Esophagus muscularis mucosa (tissue), 4 donors: ENCODE measurements at regions of chr17 and their contacts with region 1.

Region 1: DNA sequence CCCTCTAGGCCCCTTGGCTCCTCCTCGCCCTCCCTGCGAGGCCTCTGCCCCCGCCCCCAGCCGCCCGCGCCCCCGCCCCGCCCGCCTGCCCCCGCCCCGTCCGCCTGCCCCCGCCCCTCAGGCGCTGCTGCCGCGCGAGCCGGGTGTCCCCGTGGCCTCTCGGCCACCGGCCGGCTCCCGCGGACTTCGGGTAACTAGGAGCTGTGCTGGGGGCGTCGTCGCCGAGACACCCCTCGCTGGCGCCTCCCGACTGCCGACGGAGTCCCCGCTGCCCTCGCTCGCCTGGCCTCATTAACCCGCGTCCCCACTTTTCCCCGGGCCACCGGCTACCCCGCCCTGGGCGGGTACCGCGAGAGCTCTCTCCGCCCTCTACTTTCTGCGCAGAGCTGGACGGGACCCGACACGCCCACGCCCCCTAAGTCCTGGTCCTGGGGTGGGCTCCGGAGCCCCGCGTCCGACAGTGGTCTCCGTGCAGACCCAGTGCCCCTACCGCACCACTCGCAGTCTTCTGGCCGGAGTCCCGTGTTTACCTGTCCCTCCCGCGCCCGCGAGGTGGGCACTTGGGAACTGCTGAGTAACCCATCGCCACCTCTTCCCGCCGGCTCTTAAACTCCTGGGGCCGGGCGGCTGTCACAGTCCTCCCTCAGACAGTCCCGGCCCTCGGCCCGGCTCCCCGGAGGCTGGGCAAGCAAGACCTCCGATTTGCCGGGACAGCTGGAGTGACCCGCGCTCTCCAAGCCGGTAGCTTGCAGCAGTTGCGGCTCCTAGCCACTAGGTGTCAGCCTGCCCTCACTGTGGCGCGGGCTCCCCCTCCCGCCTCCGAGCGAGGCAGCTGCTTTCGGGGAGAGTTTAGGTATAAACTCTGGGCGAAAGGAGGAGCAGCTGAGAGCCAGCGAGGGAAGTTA is at the start of gene TLCD1:
- DNase-seq: peak; percentile 98
- H3K4me3 ChIP-seq: peak within 1 kb of the TSS; percentile 72 to 98 (median 76)
- H3K27ac ChIP-seq: peak within 1 kb of the TSS; percentile 95 to 98 (median 96)
- H3K4me1 ChIP-seq: peaks cover 35 to 61% (median 57%) of the 10 kb centered on the region in 4 donors
- H3K27me3 ChIP-seq: no peaks in the 10 kb centered on the region
- CTCF ChIP-seq: peak; percentile 98 to 100 (median 100)
- EP300 ChIP-seq: no peak
- POLR2A ChIP-seq: no peak
- total RNA-seq, gene TLCD1: 1.0 to 1.5 (median 1.3) TPM in 3 of 4 donors, not detected in the other

Region 2: DNA sequence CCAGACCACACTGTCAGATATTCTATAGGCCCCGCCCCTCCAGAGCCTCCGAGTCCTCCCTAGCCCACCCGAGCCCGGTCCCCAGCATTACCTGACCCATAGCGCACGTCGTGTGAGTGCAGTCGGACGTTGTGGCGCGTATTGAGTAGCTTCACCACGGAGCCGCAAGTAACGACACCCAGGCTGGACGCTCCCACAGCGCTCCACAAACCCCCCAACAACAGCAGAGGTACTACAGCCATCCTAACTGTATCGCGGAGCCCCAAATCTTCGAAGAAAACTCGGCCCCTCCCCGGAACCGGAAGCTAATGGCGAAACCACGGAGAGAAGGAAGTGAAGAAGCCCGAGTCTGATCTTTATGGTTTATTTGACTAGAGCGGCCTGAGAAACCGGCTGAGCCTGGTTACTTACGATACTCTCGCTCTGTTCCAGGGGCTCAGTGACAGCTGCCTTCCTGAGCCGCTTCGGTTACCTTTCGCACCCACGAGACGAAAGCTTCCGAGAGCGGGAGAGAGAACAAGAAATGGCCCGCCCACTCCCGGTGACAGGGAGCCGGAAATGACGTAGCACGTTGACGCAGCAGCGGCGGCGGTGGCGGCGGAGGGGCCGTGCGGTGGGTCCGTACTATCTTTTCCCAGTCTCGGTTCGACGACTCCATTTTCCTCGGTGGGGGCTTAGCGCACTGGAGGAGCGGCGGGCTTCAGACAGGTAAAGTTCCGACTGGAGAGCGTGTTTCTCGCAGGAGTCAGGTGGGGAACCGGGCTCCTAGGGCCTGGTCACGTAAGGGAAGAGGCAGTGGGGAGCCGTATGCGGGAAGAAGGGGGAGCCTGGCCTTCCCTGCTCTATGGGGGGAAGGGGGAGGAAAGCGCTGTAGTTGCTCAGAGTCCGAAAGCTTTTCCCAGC is 64.6 kb before region 1 on chr17 and contains the starts of genes SDF2 and SUPT6H:
- intact Hi-C with region 1: no loop called
- DNase-seq: peak; percentile 99
- H3K4me3 ChIP-seq: peak within 1 kb of the TSS; percentile 76 to 83 (median 80)
- H3K27ac ChIP-seq: peak within 1 kb of the TSS; percentile 95 to 99 (median 96)
- H3K4me1 ChIP-seq: peaks cover 26 to 65% (median 51%) of the 10 kb centered on the region in 4 donors
- H3K27me3 ChIP-seq: no peaks in the 10 kb centered on the region
- CTCF ChIP-seq: no peak
- EP300 ChIP-seq: no peak
- POLR2A ChIP-seq: peak; percentile 96
- total RNA-seq, gene SDF2: 39.1 to 46.7 (median 42.6) TPM
- total RNA-seq, gene SUPT6H: 57.3 to 84.4 (median 71.1) TPM

Region 3: GRCh38 chr17:28743225-28744103 is 17.0 kb after region 1 on chr17 and contains the start of gene TRAF4:
- intact Hi-C with region 1: loop called (anchors 2 kb)
- DNase-seq: no peak
- H3K4me3 ChIP-seq: peak within 1 kb of the TSS; percentile 61 to 95 (median 76)
- H3K27ac ChIP-seq: peak within 1 kb of the TSS; percentile 80 to 95 (median 90)
- H3K4me1 ChIP-seq: peaks cover 37 to 49% (median 47%) of the 10 kb centered on the region in 4 donors
- H3K27me3 ChIP-seq: no peaks in the 10 kb centered on the region
- CTCF ChIP-seq: peak in 2 of 3 experiments; percentile 35 to 57
- EP300 ChIP-seq: no peak
- POLR2A ChIP-seq: no peak
- total RNA-seq, gene TRAF4: 4.6 to 12.6 (median 10.6) TPM

Region 4: DNA sequence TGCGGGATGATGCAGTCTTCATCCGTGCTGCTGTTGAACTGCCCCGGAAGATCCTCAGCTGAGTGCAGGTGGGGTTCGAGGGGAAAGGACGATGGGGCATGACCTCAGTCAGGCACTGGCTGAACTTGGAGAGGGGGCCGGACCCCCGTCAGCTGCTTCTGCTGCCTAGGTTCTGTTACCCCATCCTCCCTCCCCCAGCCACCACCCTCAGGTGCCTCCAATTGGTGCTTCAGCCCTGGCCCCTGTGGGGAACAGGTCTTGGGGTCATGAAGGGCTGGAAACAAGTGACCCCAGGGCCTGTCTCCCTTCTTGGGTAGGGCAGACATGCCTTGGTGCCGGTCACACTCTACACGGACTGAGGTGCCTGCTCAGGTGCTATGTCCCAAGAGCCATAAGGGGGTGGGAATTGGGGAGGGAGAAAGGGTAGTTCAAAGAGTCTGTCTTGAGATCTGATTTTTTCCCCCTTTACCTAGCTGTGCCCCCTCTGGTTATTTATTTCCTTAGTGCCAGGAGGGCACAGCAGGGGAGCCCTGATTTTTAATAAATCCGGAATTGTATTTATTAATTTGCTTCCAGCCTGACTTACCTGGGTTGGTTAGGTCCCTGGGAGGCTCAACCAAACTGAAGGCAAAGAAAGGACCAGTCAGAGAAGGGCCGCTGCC is 23.2 kb after region 1 on chr17:
- intact Hi-C with region 1: loop called (anchors 2 kb)
- DNase-seq: no peak
- H3K4me3 ChIP-seq: no peak overlapping the region
- H3K27ac ChIP-seq: peak overlapping the region; percentile 13 to 60 (median 36)
- H3K4me1 ChIP-seq: peaks cover 33 to 48% (median 44%) of the 10 kb centered on the region in 4 donors
- H3K27me3 ChIP-seq: no peaks in the 10 kb centered on the region
- CTCF ChIP-seq: no peak
- EP300 ChIP-seq: no peak
- POLR2A ChIP-seq: no peak